Colonic mucosa (tissue), 4 donors: ENCODE measurements at regions of chr11 and their contacts with region 1.

Region 1: DNA sequence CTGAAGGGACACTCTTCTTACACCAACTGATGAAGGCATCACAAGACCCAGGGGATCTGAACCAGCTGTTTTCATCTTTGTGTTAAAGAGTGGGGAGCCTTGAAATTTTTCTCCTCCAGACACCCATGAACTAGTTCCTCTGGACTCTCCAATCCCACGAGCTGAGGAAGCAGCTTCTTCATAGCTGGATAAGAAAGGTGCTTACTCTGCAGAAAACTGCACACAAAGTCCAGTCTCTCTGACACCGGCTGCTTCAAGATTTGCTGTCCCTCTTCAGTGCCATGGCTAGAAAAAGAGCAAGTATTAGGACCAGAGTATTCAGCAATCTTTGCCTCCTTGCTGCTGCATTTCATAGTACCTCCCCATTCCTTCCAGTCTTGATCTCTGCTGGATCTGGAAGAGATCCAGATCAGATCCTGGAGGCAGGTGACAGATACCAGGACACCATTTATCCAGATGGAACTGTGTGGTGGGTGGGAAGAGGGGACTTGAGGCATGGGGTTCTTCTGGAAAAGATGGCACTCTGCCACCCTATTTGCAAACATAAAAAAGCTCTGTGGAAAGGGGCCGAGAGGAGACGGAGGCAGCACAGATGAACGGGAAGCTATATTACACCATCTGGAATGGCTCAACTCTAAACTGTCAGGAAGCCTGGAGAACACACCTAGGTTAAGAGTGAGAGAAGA is 25.5 kb downstream of the IL18BP start:
- DNase-seq: no peak
- H3K4me3 ChIP-seq: no peak overlapping the region
- H3K27ac ChIP-seq: no peak overlapping the region
- H3K4me1 ChIP-seq: no peaks in the 10 kb centered on the region
- H3K27me3 ChIP-seq: no peaks in the 10 kb centered on the region
- CTCF ChIP-seq: no peak

Region 2: DNA sequence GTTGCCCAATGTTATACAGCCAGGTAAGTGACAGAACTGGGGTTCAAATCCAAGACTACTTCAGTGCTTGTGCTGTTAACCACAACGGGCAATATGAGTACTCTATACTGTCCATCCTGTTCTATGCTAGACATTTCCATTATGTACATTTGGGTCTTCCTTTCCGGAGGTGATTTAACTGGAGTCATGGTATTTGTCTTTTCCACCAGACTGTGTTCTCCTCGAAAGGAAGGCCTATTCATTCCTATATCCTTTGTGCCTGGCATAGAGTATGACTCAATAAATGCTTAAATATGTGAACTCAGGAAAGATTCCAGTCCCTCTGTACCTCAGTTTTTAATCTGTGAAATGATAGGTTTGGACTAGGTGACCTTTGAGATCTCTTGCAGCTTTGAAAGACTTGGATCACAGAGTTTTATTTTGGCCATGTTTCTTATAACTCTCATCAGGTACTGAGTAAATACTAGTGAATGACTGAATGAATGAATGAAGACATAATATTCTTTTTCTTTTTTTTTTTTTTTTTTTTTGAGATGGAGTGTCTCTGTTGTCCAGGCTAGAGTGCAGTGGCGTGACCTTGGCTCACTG is 88.8 kb before region 1 on chr11:
- intact Hi-C with region 1: no loop called
- DNase-seq: no peak
- H3K4me3 ChIP-seq: no peak overlapping the region
- H3K27ac ChIP-seq: no peak overlapping the region
- H3K4me1 ChIP-seq: no peaks in the 10 kb centered on the region
- H3K27me3 ChIP-seq: no peaks in the 10 kb centered on the region
- CTCF ChIP-seq: no peak

Region 3: DNA sequence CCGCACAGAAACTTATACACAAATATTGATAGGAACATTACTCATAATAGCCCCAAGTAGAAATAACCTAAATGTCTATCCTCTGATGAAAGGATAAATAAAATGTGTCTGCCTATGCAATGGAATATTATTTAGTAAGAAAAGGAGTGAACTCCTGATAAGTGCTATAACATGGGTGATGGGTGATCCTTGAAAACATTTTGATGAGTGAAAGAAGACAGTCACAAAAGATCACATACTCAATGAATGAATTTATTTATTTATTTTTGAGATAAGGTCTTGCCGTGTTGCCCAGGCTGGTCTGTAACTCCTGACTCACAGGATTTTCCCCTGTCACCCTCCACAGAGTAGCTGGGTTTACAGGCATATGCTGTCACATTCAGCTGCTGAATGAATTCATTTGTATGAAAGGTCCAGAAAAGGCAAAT is 78.1 kb before region 1 on chr11:
- intact Hi-C with region 1: no loop called
- DNase-seq: no peak
- H3K4me3 ChIP-seq: no peak overlapping the region
- H3K27ac ChIP-seq: no peak overlapping the region
- H3K4me1 ChIP-seq: peaks cover 7% of the 10 kb centered on the region
- H3K27me3 ChIP-seq: no peaks in the 10 kb centered on the region
- CTCF ChIP-seq: no peak

Region 4: DNA sequence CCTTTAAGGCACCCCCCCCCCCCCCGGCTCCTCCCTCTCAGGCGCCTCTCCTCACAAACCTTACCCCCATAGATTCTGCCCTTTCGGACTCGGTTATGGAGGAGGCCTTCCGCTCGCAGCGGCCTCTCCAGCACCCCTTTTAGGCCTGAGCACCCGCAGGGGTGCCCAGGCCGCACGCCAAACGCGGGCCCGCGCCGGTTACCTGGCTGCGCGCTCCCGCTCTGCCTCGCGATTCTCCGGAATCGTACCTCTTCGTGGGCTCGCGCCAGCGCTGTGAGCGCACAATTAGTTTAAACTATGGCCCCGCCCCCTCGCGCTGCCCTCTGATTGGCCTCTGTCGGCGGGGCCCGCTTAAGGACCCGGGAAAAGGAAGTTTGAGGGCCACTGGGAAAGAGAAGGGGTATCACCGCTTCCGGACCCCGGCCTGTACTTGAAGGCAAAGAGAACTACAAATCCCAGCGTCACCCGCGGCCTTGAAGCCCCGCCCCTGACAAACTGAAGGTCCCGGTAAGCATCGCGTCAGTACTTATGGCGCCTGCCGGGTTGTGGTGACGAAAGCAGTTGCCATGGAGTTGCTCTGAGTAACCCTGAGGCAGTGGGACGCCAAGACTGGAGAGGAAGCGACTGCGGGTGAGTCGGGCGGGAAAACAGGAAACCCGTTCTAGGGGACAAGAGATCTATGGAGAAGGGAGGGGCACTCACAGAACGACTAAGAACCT is 56.2 kb after region 1 on chr11 and contains the starts of genes LRRC51 and NUMA1:
- intact Hi-C with region 1: no loop called
- DNase-seq: peak; percentile 100
- H3K4me3 ChIP-seq: peak within 1 kb of the TSS; percentile 76
- H3K27ac ChIP-seq: peak within 1 kb of the TSS; percentile 88
- H3K4me1 ChIP-seq: no peaks in the 10 kb centered on the region
- H3K27me3 ChIP-seq: no peaks in the 10 kb centered on the region
- CTCF ChIP-seq: no peak
- total RNA-seq, gene LRRC51: 6.2 to 10.9 TPM
- total RNA-seq, gene NUMA1: 154 to 158 TPM

Region 5: GRCh38 chr11:72091005-72091691 is 66.9 kb after region 1 on chr11:
- intact Hi-C with region 1: loop called (anchors 2 kb)
- DNase-seq: peak; percentile 87
- H3K4me3 ChIP-seq: no peak overlapping the region
- H3K27ac ChIP-seq: no peak overlapping the region
- H3K4me1 ChIP-seq: peaks cover 3% of the 10 kb centered on the region
- H3K27me3 ChIP-seq: no peaks in the 10 kb centered on the region
- CTCF ChIP-seq: peak; percentile 89